ENCODE measurements at regions of chr15 and their contacts with region 1.

Region 1: DNA sequence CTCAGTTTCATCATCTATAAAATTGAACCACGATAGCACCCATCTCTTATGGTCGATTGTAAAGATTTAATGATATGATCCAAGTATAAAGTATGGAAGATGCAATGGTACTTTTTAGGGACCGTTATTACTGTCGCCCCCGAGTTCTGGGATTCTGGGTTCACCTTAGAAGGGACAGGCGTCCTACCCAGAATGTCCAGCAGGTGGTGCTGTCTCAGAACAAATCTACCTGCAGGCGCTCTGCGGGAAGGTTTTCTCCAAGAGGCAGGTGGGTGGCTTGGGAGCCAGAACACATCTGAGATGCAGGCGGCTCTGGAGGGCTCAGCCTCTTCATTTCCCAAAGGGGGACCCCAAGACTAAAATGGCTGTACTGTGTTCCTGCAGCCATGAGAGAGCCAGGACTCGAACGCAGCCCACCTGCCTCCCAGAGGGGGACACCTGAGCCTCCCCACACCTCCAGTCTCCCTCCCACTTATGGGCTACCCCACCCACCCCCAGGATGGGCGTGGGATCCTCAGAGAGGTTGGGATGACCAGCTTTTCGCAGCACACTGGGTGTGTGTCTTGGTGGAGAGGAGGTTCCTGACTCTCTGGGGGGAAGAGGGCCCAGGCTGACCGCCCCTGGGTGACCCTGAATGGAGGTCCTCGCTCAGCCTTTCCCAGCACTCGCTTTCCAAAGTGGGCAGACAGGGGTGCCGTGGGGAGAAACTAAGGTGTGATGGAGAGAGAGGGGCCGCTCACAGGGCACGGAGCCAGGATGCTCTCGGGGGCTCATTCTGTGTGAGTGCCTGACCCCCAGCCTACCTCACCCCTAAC is 28.1 kb upstream of the CORO2B start:
- DNase-seq: peak; percentile 84
- H3K4me3 ChIP-seq: no peak overlapping the region
- H3K27ac ChIP-seq: no peak overlapping the region
- H3K4me1 ChIP-seq: no peaks in the 10 kb centered on the region
- H3K27me3 ChIP-seq: peaks cover 0 to 13% (median 3%) of the 10 kb centered on the region in 3 donors
- CTCF ChIP-seq: peak; percentile 58 to 94 (median 76)
- EP300 ChIP-seq: no peak
- POLR2A ChIP-seq: no peak

Region 2: GRCh38 chr15:68924866-68925560 is 374.3 kb after region 1 on chr15:
- intact Hi-C with region 1: loop called (anchors 5 kb)
- DNase-seq: peak; percentile 71
- H3K4me3 ChIP-seq: no peak overlapping the region
- H3K27ac ChIP-seq: no peak overlapping the region
- H3K4me1 ChIP-seq: no peaks in the 10 kb centered on the region
- H3K27me3 ChIP-seq: peaks cover 0 to 6% (median 0%) of the 10 kb centered on the region in 3 donors
- CTCF ChIP-seq: peak; percentile 17 to 67 (median 59)
- EP300 ChIP-seq: no peak
- POLR2A ChIP-seq: no peak

Region 3: GRCh38 chr15:69265347-69265955 is 714.8 kb after region 1 on chr15:
- intact Hi-C with region 1: no loop called
- DNase-seq: no peak
- H3K4me3 ChIP-seq: no peak overlapping the region
- H3K27ac ChIP-seq: no peak overlapping the region
- H3K4me1 ChIP-seq: no peaks in the 10 kb centered on the region
- H3K27me3 ChIP-seq: no peaks in the 10 kb centered on the region
- CTCF ChIP-seq: peak; percentile 11 to 51 (median 40)
- EP300 ChIP-seq: no peak
- POLR2A ChIP-seq: no peak

Measured in sigmoid colon (tissue), 7 donors.